Caco-2 (cell line): ENCODE measurements at regions of chr17 and their contacts with region 1.

Region 1: GRCh38 chr17:28008542-28008941 is 33.9 kb upstream of the NLK start:
- DNase-seq: peak; percentile 91 to 94
- H3K4me3 ChIP-seq: no peak overlapping the region
- H3K4me3 Mint-ChIP-seq: no peak overlapping the region
- H3K27ac Mint-ChIP-seq: no peak overlapping the region
- H3K4me1 ChIP-seq: peaks cover 5% of the 10 kb centered on the region; the same call in 1 of the 2 replicates
- H3K4me1 Mint-ChIP-seq: no peaks in the 10 kb centered on the region
- H3K27me3 ChIP-seq: no peaks in the 10 kb centered on the region
- H3K27me3 Mint-ChIP-seq: peaks cover 5% of the 10 kb centered on the region
- CTCF ChIP-seq: peak in 1 of 2 experiments; percentile 0

Region 2: DNA sequence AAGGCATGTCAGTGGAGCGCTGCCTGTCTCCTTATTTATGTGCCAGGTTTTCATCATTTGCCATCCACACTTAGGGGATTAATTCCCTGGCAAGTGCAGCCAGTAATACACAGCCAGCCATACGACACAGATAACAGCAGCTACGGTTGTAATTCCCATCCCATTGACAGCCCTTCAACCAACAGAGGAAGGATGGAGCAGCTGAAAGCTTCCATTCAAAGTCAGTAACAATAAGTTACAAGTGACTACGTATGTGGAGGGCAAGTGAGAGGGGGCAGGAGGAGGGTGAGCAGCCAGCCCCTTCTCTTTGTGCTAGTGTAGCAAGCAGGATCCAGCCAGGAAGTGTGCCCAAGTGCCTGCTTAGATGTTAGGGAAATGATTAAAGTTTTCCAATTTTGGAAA is 61.5 kb before region 1 on chr17:
- CTCF ChIA-PET with region 1: no interaction called
- POLR2A ChIA-PET with region 1: no interaction called
- intact Hi-C with region 1: loop called (anchors 2 kb)
- DNase-seq: no peak
- H3K4me3 ChIP-seq: no peak overlapping the region
- H3K4me3 Mint-ChIP-seq: no peak overlapping the region
- H3K27ac Mint-ChIP-seq: no peak overlapping the region
- H3K4me1 ChIP-seq: peaks cover 23% of the 10 kb centered on the region
- H3K4me1 Mint-ChIP-seq: peaks cover 18% of the 10 kb centered on the region
- H3K27me3 ChIP-seq: no peaks in the 10 kb centered on the region
- H3K27me3 Mint-ChIP-seq: no peaks in the 10 kb centered on the region
- CTCF ChIP-seq: no peak

Region 3: DNA sequence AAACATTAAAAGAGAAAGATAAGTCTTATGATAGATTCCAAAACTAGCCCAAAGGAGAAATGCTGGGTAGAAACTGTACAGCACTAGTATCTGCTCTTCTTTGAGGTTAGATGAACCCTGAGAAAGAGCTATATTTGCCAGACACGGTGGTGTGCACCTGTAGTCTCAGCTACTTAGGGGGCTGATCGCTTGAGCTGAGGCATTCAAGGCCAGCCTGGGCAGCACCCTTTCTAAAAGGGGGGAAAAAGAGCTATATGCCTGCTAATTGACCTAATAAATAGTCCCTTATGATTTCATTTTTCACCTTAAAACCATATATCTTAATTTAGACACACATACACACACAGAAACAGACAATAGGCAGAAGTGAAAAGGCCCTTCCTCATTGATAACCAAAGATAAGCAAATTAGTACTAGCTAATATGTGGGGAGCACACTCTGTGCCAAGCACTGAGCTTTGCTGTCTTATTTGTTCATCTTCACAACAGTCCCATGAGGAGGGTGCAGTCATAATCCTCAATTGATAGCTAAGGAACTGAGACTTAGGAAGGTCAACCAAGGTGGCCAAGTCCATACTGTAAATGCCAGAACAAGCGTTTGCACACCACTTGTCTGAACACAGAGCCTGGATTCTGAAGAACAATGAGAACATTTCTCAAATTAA is 22.7 kb before region 1 on chr17:
- CTCF ChIA-PET with region 1: interaction called, 5 read pairs
- POLR2A ChIA-PET with region 1: no interaction called
- intact Hi-C with region 1: loop called (anchors 1 kb)
- DNase-seq: no peak
- H3K4me3 ChIP-seq: no peak overlapping the region
- H3K4me3 Mint-ChIP-seq: no peak overlapping the region
- H3K27ac Mint-ChIP-seq: peak overlapping the region; percentile 55
- H3K4me1 ChIP-seq: peaks cover 87% of the 10 kb centered on the region
- H3K4me1 Mint-ChIP-seq: peaks cover 71% of the 10 kb centered on the region
- H3K27me3 ChIP-seq: no peaks in the 10 kb centered on the region
- H3K27me3 Mint-ChIP-seq: no peaks in the 10 kb centered on the region
- CTCF ChIP-seq: no peak

Region 4: DNA sequence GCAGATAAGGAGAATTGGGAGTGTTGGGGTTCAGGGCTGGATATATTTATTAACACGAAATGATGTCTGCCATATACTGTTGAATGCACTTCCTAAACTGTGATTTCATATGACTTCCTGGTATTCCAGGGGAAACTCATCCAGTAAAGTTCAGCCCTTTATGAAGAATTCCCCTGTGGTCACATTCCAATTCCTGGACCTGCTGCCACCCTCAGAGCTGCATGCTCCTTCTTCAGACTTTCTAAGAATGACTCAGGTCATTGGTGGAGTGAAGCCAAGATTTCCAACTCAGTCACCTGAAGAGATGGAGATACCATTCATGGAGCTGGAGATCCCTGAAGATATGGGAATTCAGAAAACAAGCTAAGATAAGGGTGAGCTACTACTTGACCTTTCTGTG is 196.2 kb after region 1 on chr17:
- CTCF ChIA-PET with region 1: no interaction called
- POLR2A ChIA-PET with region 1: no interaction called
- intact Hi-C with region 1: no loop called
- DNase-seq: no peak
- H3K4me3 ChIP-seq: no peak overlapping the region
- H3K4me3 Mint-ChIP-seq: no peak overlapping the region
- H3K27ac Mint-ChIP-seq: no peak overlapping the region
- H3K4me1 ChIP-seq: no peaks in the 10 kb centered on the region
- H3K4me1 Mint-ChIP-seq: no peaks in the 10 kb centered on the region
- H3K27me3 ChIP-seq: no peaks in the 10 kb centered on the region
- H3K27me3 Mint-ChIP-seq: no peaks in the 10 kb centered on the region
- CTCF ChIP-seq: no peak